ENCODE measurements at regions of chr12 and their contacts with region 1.

Region 1: DNA sequence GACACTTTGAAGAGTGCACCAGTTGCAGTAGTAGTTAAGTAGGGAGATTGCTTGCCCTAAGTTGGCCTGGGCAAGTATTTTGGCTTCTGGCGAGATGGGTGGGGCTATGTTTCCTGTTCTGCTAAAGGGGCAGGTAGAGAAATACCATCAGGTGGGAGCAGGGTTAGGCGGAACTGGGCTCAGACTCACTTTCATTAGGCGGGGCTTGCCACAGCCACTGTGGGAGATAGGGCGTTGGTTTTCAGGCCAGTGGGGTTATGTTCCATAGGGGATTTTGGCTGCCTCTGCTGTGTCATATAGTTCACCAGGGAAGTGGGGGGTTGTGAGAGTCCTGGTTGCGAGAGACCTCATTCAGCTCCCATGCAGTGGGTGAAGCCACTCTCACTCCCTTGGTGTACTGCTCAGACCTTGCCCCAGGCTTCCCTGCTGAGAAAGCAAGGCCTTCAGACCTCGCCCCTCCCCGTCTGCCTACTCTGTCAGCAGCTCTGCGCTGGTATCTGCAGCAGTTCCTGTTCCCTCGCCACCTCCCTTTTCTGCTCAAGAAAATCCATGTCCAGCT is 43.3 kb downstream of the AEBP2 start:
- DNase-seq: peak; percentile 84
- H3K4me3 Mint-ChIP-seq: peak overlapping the region; percentile 62
- H3K27ac Mint-ChIP-seq: peak overlapping the region; percentile 85
- H3K4me1 Mint-ChIP-seq: peaks cover 37% of the 10 kb centered on the region
- H3K27me3 Mint-ChIP-seq: no peaks in the 10 kb centered on the region
- CTCF ChIP-seq: no peak

Region 2: DNA sequence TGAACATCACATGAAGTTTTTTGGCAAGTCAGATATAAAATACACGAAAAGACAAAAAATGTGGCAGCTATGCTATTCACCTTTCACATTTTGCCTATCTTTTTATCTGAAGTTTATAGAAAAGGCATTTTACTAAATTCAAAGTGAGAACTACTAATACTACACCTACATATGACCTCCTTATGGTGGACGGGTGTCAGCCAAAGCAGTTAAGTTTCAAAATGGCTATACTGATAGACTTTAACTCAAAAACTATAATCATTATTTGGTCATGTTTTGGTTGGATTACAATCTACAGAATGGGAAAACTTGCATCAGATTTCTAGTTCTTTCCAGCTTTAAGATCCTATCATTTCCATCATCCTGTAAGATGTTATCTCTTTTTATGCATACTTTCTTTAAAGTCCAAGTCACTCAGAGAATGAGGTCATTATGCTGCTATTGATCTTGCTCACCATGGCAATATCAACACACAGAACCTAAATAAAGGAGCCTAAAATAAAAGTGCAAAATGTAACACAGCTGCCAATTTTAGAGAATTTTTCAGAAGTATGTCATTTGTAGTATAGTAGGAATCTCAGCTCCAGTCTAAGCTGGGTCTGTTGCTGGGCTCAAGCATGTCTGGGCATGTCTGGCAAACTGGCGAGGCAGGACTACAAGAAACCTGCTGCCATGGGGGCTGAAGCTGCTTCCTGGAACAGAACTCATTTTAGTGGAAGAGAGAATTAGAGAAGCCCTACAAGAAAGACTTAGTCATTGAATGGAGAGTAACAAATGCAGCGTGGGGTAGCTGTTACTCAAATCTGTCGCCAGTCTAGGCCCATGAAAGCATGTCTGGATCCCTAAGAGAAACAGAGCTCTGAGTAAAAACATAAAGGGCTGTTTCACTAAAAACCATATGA is 51.0 kb before region 1 on chr12:
- CTCF ChIA-PET with region 1: no interaction called
- POLR2A ChIA-PET with region 1: interaction called, 13 read pairs
- intact Hi-C with region 1: no loop called
- DNase-seq: peak; percentile 82
- H3K4me3 Mint-ChIP-seq: no peak overlapping the region
- H3K27ac Mint-ChIP-seq: peak overlapping the region; percentile 100
- H3K4me1 Mint-ChIP-seq: peaks cover 11% of the 10 kb centered on the region
- H3K27me3 Mint-ChIP-seq: no peaks in the 10 kb centered on the region
- CTCF ChIP-seq: no peak

Region 3: GRCh38 chr12:19439059-19440018 is 43.3 kb before region 1 on chr12 and contains the start of gene AEBP2:
- CTCF ChIA-PET with region 1: no interaction called
- POLR2A ChIA-PET with region 1: interaction called, 8 read pairs
- intact Hi-C with region 1: loop called (anchors 2 kb)
- DNase-seq: peak; percentile 91
- H3K4me3 Mint-ChIP-seq: peak within 1 kb of the TSS; percentile 96
- H3K27ac Mint-ChIP-seq: peak within 1 kb of the TSS; percentile 90
- H3K4me1 Mint-ChIP-seq: peaks cover 1% of the 10 kb centered on the region
- H3K27me3 Mint-ChIP-seq: no peaks in the 10 kb centered on the region
- CTCF ChIP-seq: no peak
- total RNA-seq, gene AEBP2: 41.0 and 49.2 TPM in 2 replicates

Region 4: GRCh38 chr12:19520646-19521415 is 38.2 kb after region 1 on chr12:
- CTCF ChIA-PET with region 1: no interaction called
- POLR2A ChIA-PET with region 1: no interaction called
- intact Hi-C with region 1: no loop called
- DNase-seq: no peak
- H3K4me3 Mint-ChIP-seq: no peak overlapping the region
- H3K27ac Mint-ChIP-seq: no peak overlapping the region
- H3K4me1 Mint-ChIP-seq: no peaks in the 10 kb centered on the region
- H3K27me3 Mint-ChIP-seq: no peaks in the 10 kb centered on the region
- CTCF ChIP-seq: no peak